Calu3 (cell line): ENCODE measurements at regions of chr3 and their contacts with region 1.

Region 1: GRCh38 chr3:148631124-148631903 is 66.4 kb upstream of the AGTR1 start:
- DNase-seq: peak; percentile 40
- H3K4me3 Mint-ChIP-seq: no peak overlapping the region
- H3K27ac Mint-ChIP-seq: no peak overlapping the region
- H3K4me1 Mint-ChIP-seq: no peaks in the 10 kb centered on the region
- H3K27me3 Mint-ChIP-seq: no peaks in the 10 kb centered on the region
- CTCF ChIP-seq: peak; percentile 47

Region 2: GRCh38 chr3:148319161-148319915 is 312.0 kb before region 1 on chr3:
- CTCF ChIA-PET with region 1: no interaction called
- intact Hi-C with region 1: loop called (anchors 5 kb)
- DNase-seq: no peak
- H3K4me3 Mint-ChIP-seq: no peak overlapping the region
- H3K27ac Mint-ChIP-seq: no peak overlapping the region
- H3K4me1 Mint-ChIP-seq: no peaks in the 10 kb centered on the region
- H3K27me3 Mint-ChIP-seq: no peaks in the 10 kb centered on the region
- CTCF ChIP-seq: no peak

Region 3: GRCh38 chr3:148379763-148380382 is 251.4 kb before region 1 on chr3:
- CTCF ChIA-PET with region 1: interaction called, 17 read pairs
- intact Hi-C with region 1: loop called (anchors 1 kb)
- DNase-seq: peak; percentile 55
- H3K4me3 Mint-ChIP-seq: no peak overlapping the region
- H3K27ac Mint-ChIP-seq: no peak overlapping the region
- H3K4me1 Mint-ChIP-seq: no peaks in the 10 kb centered on the region
- H3K27me3 Mint-ChIP-seq: no peaks in the 10 kb centered on the region
- CTCF ChIP-seq: peak; percentile 39

Region 4: DNA sequence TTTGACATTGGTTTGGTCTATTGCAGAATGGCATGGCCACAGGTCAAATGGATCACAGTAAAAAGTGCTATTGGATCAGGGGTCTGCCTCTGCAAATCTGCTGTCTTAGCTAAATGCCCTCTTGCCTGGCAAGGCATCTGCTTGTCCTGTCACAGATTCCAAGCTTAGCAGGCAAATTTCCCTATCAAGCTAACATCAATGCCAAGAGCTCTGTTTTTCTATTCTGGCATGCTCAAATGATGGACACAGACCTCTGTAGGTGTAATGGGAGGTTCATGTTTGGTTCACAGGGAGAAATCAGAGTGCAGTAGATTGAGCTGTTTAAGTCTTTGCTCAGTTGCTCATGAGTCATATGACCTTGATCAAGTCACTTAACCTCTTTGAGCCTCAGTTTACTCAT is 141.5 kb after region 1 on chr3:
- CTCF ChIA-PET with region 1: no interaction called
- intact Hi-C with region 1: no loop called
- DNase-seq: no peak
- H3K4me3 Mint-ChIP-seq: no peak overlapping the region
- H3K27ac Mint-ChIP-seq: no peak overlapping the region
- H3K4me1 Mint-ChIP-seq: no peaks in the 10 kb centered on the region
- H3K27me3 Mint-ChIP-seq: no peaks in the 10 kb centered on the region
- CTCF ChIP-seq: no peak

Region 5: GRCh38 chr3:148796793-148797192 is 165.5 kb after region 1 on chr3:
- CTCF ChIA-PET with region 1: no interaction called
- intact Hi-C with region 1: no loop called
- DNase-seq: peak; percentile 53
- H3K4me3 Mint-ChIP-seq: no peak overlapping the region
- H3K27ac Mint-ChIP-seq: peak overlapping the region; percentile 58
- H3K4me1 Mint-ChIP-seq: no peaks in the 10 kb centered on the region
- H3K27me3 Mint-ChIP-seq: no peaks in the 10 kb centered on the region
- CTCF ChIP-seq: no peak